CD8-positive, alpha-beta T cell (primary cell): ENCODE measurements at regions of chr7 and their contacts with region 1.

Region 1: GRCh38 chr7:74173866-74174605 is at the start of gene EIF4H:
- DNase-seq: peak; percentile 91 to 99 (median 96)
- ATAC-seq: peak; percentile 91
- H3K4me3 ChIP-seq: peak within 1 kb of the TSS; percentile 80 to 83
- H3K4me3 Mint-ChIP-seq: peak within 1 kb of the TSS; percentile 93
- H3K27ac ChIP-seq: peak within 1 kb of the TSS; percentile 82 to 84
- H3K27ac Mint-ChIP-seq: peak within 1 kb of the TSS; percentile 98
- H3K4me1 ChIP-seq: peaks cover 46% of the 10 kb centered on the region
- H3K4me1 Mint-ChIP-seq: peaks cover 49% of the 10 kb centered on the region
- H3K27me3 ChIP-seq: no peaks in the 10 kb centered on the region
- H3K27me3 Mint-ChIP-seq: no peaks in the 10 kb centered on the region
- CTCF ChIP-seq: no peak
- total RNA-seq, gene EIF4H: 330 to 357 TPM

Region 2: DNA sequence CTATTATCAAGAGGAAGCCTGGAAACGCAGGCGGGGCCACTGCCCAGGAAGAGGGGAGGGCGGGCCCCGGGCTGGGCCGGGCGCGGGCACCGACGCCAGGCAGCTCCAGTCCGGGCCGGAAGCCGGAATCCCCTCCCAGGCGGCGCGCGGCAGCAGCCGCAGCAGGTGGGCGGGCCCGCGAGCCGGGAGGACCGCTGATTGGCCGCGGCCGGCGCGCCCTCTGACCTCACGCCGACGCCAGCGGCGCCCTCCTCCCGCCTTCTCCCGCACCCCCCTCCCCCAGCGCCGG is 617.0 kb before region 1 on chr7:
- CTCF ChIA-PET with region 1: no interaction called
- POLR2A ChIA-PET with region 1: no interaction called
- intact Hi-C with region 1: loop called in 1 of 2 experiments (anchors 2 kb)
- DNase-seq: peak; percentile 79 to 96 (median 90)
- ATAC-seq: peak; percentile 91
- H3K4me3 ChIP-seq: peak overlapping the region; percentile 83 to 84
- H3K4me3 Mint-ChIP-seq: peak overlapping the region; percentile 95
- H3K27ac ChIP-seq: peak overlapping the region; percentile 98 to 99
- H3K27ac Mint-ChIP-seq: peak overlapping the region; percentile 99
- H3K4me1 ChIP-seq: peaks cover 23% of the 10 kb centered on the region
- H3K4me1 Mint-ChIP-seq: peaks cover 36% of the 10 kb centered on the region
- H3K27me3 ChIP-seq: no peaks in the 10 kb centered on the region
- H3K27me3 Mint-ChIP-seq: no peaks in the 10 kb centered on the region
- CTCF ChIP-seq: no peak

Region 3: GRCh38 chr7:74068393-74069085 is 105.5 kb before region 1 on chr7:
- CTCF ChIA-PET with region 1: interaction called, 18 read pairs
- POLR2A ChIA-PET with region 1: no interaction called
- intact Hi-C with region 1: no loop called
- DNase-seq: no peak
- ATAC-seq: no peak
- H3K4me3 ChIP-seq: no peak overlapping the region
- H3K4me3 Mint-ChIP-seq: no peak overlapping the region
- H3K27ac ChIP-seq: no peak overlapping the region
- H3K27ac Mint-ChIP-seq: no peak overlapping the region
- H3K4me1 ChIP-seq: no peaks in the 10 kb centered on the region
- H3K4me1 Mint-ChIP-seq: peaks cover 2% of the 10 kb centered on the region
- H3K27me3 ChIP-seq: no peaks in the 10 kb centered on the region
- H3K27me3 Mint-ChIP-seq: no peaks in the 10 kb centered on the region
- CTCF ChIP-seq: no peak

Region 4: GRCh38 chr7:74206589-74207120 is 32.6 kb after region 1 on chr7:
- CTCF ChIA-PET with region 1: interaction called, 10 read pairs
- POLR2A ChIA-PET with region 1: no interaction called
- intact Hi-C with region 1: no loop called
- DNase-seq: peak; percentile 57 to 89 (median 79)
- ATAC-seq: peak; percentile 86
- H3K4me3 ChIP-seq: peak overlapping the region; percentile 42 to 54
- H3K4me3 Mint-ChIP-seq: no peak overlapping the region
- H3K27ac ChIP-seq: no peak overlapping the region
- H3K27ac Mint-ChIP-seq: no peak overlapping the region
- H3K4me1 ChIP-seq: peaks cover 20% of the 10 kb centered on the region
- H3K4me1 Mint-ChIP-seq: peaks cover 22% of the 10 kb centered on the region
- H3K27me3 ChIP-seq: no peaks in the 10 kb centered on the region
- H3K27me3 Mint-ChIP-seq: peaks cover 3% of the 10 kb centered on the region
- CTCF ChIP-seq: peak; percentile 99

Region 5: DNA sequence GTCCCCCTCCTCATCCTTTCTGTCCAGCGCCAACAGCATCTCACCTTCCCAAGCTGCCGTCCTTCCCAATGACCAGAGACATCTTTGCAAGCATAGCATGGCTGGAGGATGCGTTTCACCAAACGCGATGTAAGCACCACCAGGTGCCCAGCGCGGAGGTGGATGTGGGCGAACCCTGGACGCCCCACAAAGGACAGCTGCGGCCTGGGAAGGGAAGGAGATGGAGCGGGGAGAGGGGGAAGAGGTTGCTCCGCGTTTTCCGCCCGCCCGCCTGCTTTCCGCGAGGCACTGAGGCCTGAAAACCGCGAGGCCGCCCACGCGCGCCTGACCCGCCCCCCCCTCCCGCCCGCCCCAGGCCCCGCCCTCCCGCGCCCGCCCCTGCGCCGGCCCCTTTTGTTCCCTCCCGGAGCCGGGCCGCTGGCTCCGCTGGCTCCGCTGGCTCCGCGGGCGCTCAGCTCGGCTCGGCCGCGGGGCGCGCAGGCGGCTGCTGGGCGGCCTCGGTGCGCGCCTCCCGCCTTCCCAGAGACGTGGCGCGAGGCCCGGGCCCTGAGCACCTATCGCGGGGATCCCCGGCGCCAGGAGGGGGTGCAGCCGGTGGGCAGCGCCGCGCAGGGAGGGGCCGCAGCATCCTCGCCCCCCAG is 115.1 kb after region 1 on chr7 and contains the start of gene CLIP2:
- CTCF ChIA-PET with region 1: no interaction called
- POLR2A ChIA-PET with region 1: no interaction called
- intact Hi-C with region 1: loop called in 1 of 2 experiments (anchors 1 kb)
- DNase-seq: peak; percentile 59 to 87 (median 76)
- ATAC-seq: peak; percentile 85
- H3K4me3 ChIP-seq: peak within 1 kb of the TSS; percentile 54 to 75
- H3K4me3 Mint-ChIP-seq: peak within 1 kb of the TSS; percentile 89
- H3K27ac ChIP-seq: no peak within 1 kb of the TSS
- H3K27ac Mint-ChIP-seq: no peak within 1 kb of the TSS
- H3K4me1 ChIP-seq: peaks cover 22% of the 10 kb centered on the region
- H3K4me1 Mint-ChIP-seq: peaks cover 22% of the 10 kb centered on the region
- H3K27me3 ChIP-seq: no peaks in the 10 kb centered on the region
- H3K27me3 Mint-ChIP-seq: peaks cover 8% of the 10 kb centered on the region
- CTCF ChIP-seq: no peak
- total RNA-seq, gene CLIP2: 2.1 to 2.7 TPM

Region 6: DNA sequence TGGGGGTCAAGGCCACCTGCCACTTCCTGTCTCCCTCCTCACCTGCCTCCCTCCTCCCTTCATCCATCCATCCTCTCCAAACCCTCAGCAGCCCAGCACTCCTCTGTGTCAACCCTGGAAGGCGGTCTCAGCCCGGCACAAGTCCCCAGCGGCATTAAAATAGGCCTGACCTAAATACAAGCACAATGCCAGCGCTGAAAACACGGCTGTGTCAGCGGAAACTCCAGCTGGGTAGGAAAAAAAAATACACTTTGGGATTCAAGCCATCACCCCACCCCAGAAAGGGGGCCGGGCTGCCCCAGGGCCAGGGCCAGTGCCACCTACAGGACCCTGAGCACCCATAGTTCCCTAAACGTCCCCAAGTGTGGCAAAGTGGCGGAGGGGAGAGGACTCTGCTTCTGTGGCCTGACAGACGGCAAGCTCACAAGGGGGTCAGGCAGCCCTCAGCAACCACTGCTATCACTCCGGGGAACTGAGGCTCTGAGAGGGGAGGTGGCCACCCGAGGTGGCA is 257.0 kb after region 1 on chr7:
- CTCF ChIA-PET with region 1: no interaction called
- POLR2A ChIA-PET with region 1: no interaction called
- intact Hi-C with region 1: no loop called
- DNase-seq: no peak
- ATAC-seq: no peak
- H3K4me3 ChIP-seq: no peak overlapping the region
- H3K4me3 Mint-ChIP-seq: no peak overlapping the region
- H3K27ac ChIP-seq: no peak overlapping the region
- H3K27ac Mint-ChIP-seq: no peak overlapping the region
- H3K4me1 ChIP-seq: no peaks in the 10 kb centered on the region
- H3K4me1 Mint-ChIP-seq: no peaks in the 10 kb centered on the region
- H3K27me3 ChIP-seq: no peaks in the 10 kb centered on the region
- H3K27me3 Mint-ChIP-seq: no peaks in the 10 kb centered on the region
- CTCF ChIP-seq: no peak